Dendritic cell treated with granulocyte-macrophage colony-stimulating factor and Interleukin-4, amounts not matched to agents 40 ng/mL and 50 ng/mL, for 4 days (primary cell): ENCODE measurements at regions of chr5 and their contacts with region 1.

Region 1: DNA sequence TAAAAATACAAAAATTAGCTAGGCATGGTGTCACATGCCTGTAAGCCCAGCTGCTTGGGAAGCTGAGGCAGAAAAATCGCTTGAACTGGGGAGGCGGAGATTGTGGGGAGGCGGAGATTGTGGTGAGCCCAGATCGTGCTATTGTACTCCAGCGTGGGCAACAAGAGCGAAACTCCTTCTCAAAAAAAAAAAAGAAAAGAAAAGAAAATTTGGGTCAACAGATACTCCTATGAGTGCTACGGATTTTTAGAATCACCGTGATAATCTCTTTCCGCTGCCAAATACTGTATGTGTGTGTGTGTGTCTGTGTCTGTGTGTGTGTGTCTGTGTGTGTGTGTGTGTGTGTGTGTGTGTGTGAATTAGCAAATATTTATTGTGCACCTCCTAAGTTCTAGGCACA is 64.4 kb downstream of the ARRDC3 start:
- H3K4me3 Mint-ChIP-seq: no peak overlapping the region
- H3K27ac Mint-ChIP-seq: no peak overlapping the region
- H3K4me1 Mint-ChIP-seq: peaks cover 24% of the 10 kb centered on the region
- H3K27me3 Mint-ChIP-seq: no peaks in the 10 kb centered on the region

Region 2: DNA sequence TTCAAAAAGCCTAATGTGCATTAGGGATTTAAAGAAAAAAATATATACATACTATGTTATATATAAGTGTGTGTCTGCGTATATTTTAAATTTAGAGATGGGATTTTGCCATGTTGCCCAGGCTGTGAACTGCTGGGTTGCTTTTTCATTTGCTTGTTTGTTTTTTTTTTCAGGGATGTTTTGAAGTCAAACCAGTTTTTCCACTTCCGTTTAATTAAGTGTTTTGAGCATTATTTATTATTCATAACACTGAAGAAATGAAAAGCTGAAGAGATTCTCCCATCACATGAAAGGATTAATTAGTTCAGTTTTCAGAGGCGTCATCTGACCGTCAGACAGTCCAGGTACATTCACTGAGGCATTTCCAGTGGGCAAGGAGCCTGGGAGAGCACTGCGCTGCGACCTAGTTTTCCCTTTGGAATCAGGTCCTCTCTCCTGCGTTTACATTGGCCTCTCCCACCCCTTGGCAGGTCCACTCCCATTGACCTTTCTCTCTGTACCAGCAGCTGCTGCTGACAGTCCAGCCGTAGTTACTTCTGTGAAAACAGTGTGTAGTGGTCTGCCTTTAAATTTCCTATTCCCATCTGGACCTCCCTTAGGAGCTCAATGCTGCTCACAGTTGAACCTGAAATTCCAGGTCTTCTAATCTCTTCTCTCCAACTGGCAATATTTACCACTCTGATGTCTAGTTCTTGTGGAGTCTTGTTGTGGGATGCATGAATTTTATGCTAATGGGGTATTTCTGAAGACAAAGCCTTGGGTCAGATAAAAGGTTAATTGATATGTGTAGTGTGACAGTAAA is 38.5 kb after region 1 on chr5:
- intact Hi-C with region 1: loop called (anchors 5 kb)
- H3K4me3 Mint-ChIP-seq: no peak overlapping the region
- H3K27ac Mint-ChIP-seq: no peak overlapping the region
- H3K4me1 Mint-ChIP-seq: peaks cover 37% of the 10 kb centered on the region
- H3K27me3 Mint-ChIP-seq: no peaks in the 10 kb centered on the region